ENCODE measurements at regions of chr2 and their contacts with region 1.

Region 1: GRCh38 chr2:134245340-134245984 is 8.4 kb upstream of the MGAT5 start:
- DNase-seq: peak; percentile 84
- ATAC-seq: peak; percentile 55
- H3K4me3 ChIP-seq: peak overlapping the region in 2 of 5 experiments; percentile 6 to 12
- H3K4me3 Mint-ChIP-seq: peak overlapping the region; percentile 76
- H3K27ac ChIP-seq: peak overlapping the region; percentile 50 to 83
- H3K27ac Mint-ChIP-seq: peak overlapping the region; percentile 85
- H3K4me1 ChIP-seq: peaks cover 87 to 92% of the 10 kb centered on the region in 2 donors
- H3K4me1 Mint-ChIP-seq: peaks cover 92% of the 10 kb centered on the region
- H3K27me3 ChIP-seq: no peaks in the 10 kb centered on the region
- H3K27me3 Mint-ChIP-seq: no peaks in the 10 kb centered on the region
- CTCF ChIP-seq: peak; percentile 80

Region 2: GRCh38 chr2:133690780-133691179 is 554.7 kb before region 1 on chr2:
- CTCF ChIA-PET with region 1: no interaction called
- POLR2A ChIA-PET with region 1: no interaction called
- intact Hi-C with region 1: no loop called
- DNase-seq: no peak
- ATAC-seq: no peak
- H3K4me3 ChIP-seq: no peak overlapping the region
- H3K4me3 Mint-ChIP-seq: no peak overlapping the region
- H3K27ac ChIP-seq: no peak overlapping the region
- H3K27ac Mint-ChIP-seq: no peak overlapping the region
- H3K4me1 ChIP-seq: no peaks in the 10 kb centered on the region
- H3K4me1 Mint-ChIP-seq: no peaks in the 10 kb centered on the region
- H3K27me3 ChIP-seq: no peaks in the 10 kb centered on the region
- H3K27me3 Mint-ChIP-seq: peaks cover 6% of the 10 kb centered on the region
- CTCF ChIP-seq: no peak

Region 3: GRCh38 chr2:134127496-134127895 is 118.0 kb before region 1 on chr2:
- CTCF ChIA-PET with region 1: interaction called, 58 read pairs
- POLR2A ChIA-PET with region 1: no interaction called
- intact Hi-C with region 1: no loop called
- DNase-seq: no peak
- ATAC-seq: peak; percentile 50
- H3K4me3 ChIP-seq: no peak overlapping the region
- H3K4me3 Mint-ChIP-seq: peak overlapping the region; percentile 73
- H3K27ac ChIP-seq: peak overlapping the region in 1 of 2 donors; percentile 65
- H3K27ac Mint-ChIP-seq: peak overlapping the region; percentile 71
- H3K4me1 ChIP-seq: peaks cover 70 to 74% of the 10 kb centered on the region in 2 donors
- H3K4me1 Mint-ChIP-seq: peaks cover 85% of the 10 kb centered on the region
- H3K27me3 ChIP-seq: no peaks in the 10 kb centered on the region
- H3K27me3 Mint-ChIP-seq: no peaks in the 10 kb centered on the region
- CTCF ChIP-seq: no peak

Region 4: DNA sequence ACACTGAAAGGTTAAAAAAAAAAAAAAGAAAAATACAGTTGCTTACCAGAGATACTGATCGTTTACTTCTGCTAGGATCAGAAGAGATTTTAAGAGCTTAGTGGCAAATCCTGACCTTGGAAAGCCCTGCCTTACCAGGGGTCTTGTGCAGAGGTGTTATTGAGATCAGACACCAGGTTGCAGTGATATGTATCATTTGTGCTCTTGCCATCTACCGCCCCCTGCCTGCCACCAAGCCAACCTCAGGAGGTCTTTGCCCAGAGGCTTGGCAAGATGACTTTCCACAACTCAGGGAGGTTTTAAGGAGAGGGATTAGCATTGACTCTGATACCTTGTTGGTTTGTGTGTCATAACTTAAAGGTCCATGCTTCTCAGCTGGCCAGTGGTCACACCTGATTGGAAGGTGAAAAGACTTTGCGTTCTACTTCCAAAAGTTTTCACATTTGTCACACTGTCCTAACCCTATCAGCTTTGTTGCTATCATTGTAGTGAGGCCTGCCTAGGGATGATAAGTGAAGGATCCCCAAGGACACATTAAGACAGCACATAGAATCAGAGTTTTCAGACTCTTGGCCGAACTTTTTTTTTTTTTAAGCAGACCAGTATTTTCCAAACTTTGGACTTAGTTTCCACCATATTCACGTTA is 37.8 kb before region 1 on chr2:
- CTCF ChIA-PET with region 1: interaction called, 60 read pairs
- POLR2A ChIA-PET with region 1: no interaction called
- intact Hi-C with region 1: loop called (anchors 5 kb)
- DNase-seq: peak; percentile 68
- ATAC-seq: peak; percentile 82
- H3K4me3 ChIP-seq: no peak overlapping the region
- H3K4me3 Mint-ChIP-seq: no peak overlapping the region
- H3K27ac ChIP-seq: peak overlapping the region in 1 of 2 donors; percentile 64
- H3K27ac Mint-ChIP-seq: peak overlapping the region; percentile 69
- H3K4me1 ChIP-seq: peaks cover 49 to 53% of the 10 kb centered on the region in 2 donors
- H3K4me1 Mint-ChIP-seq: peaks cover 12% of the 10 kb centered on the region
- H3K27me3 ChIP-seq: no peaks in the 10 kb centered on the region
- H3K27me3 Mint-ChIP-seq: no peaks in the 10 kb centered on the region
- CTCF ChIP-seq: peak; percentile 75

Region 5: DNA sequence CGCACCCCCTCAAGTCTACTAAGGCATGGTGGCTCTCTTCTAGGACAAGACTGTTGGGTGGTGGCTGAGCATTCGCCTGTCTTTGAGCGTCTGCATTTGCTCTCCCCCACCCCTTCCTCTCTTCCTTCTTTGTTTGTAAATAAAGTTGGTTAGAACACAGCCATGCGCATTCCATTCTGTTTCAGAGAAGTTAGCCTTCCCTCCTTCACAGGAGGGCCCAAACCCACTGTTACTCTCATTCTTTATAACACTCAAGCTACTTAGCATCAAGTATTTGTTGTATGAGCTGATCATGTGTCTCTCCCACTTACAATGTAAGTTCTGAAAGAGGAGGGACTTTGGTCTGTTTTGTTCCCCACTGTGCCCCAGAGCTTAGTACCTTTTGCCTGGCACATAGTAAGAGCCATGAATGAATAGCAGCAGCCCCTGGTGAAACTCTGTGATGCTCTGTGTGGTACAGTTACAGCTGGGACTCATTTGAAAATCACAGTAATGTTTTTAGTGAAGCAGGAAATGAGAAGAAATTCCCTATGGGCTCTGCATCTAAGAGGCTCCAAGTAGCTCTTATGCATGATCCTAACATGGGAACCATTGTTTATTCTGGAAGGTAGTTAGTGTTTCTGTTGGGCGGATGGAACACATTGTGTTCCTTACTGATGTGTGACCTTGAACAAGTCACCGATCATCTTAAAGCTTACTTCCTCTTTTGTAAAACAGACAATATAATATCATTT is 16.1 kb after region 1 on chr2:
- CTCF ChIA-PET with region 1: interaction called, 65 read pairs
- POLR2A ChIA-PET with region 1: interaction called, 14 read pairs
- intact Hi-C with region 1: loop called (anchors 2 kb)
- DNase-seq: peak; percentile 78
- ATAC-seq: peak; percentile 55
- H3K4me3 ChIP-seq: peak overlapping the region in 1 of 5 experiments; percentile 22
- H3K4me3 Mint-ChIP-seq: peak overlapping the region; percentile 80
- H3K27ac ChIP-seq: peak overlapping the region; percentile 94 to 96
- H3K27ac Mint-ChIP-seq: peak overlapping the region; percentile 99
- H3K4me1 ChIP-seq: peaks cover 92 to 94% of the 10 kb centered on the region in 2 donors
- H3K4me1 Mint-ChIP-seq: peaks cover 86% of the 10 kb centered on the region
- H3K27me3 ChIP-seq: no peaks in the 10 kb centered on the region
- H3K27me3 Mint-ChIP-seq: no peaks in the 10 kb centered on the region
- CTCF ChIP-seq: no peak

Region 6: GRCh38 chr2:134282629-134283400 is 37.4 kb after region 1 on chr2:
- CTCF ChIA-PET with region 1: interaction called, 14 read pairs
- POLR2A ChIA-PET with region 1: no interaction called
- intact Hi-C with region 1: no loop called
- DNase-seq: peak; percentile 56
- ATAC-seq: peak; percentile 64
- H3K4me3 ChIP-seq: peak overlapping the region in 1 of 5 experiments; percentile 40
- H3K4me3 Mint-ChIP-seq: peak overlapping the region; percentile 77
- H3K27ac ChIP-seq: peak overlapping the region; percentile 56 to 80
- H3K27ac Mint-ChIP-seq: peak overlapping the region; percentile 88
- H3K4me1 ChIP-seq: peaks cover 95 to 100% of the 10 kb centered on the region in 2 donors
- H3K4me1 Mint-ChIP-seq: peaks cover 78% of the 10 kb centered on the region
- H3K27me3 ChIP-seq: no peaks in the 10 kb centered on the region
- H3K27me3 Mint-ChIP-seq: no peaks in the 10 kb centered on the region
- CTCF ChIP-seq: no peak

Region 7: GRCh38 chr2:134341476-134341875 is 96.0 kb after region 1 on chr2:
- CTCF ChIA-PET with region 1: interaction called, 18 read pairs
- POLR2A ChIA-PET with region 1: no interaction called
- intact Hi-C with region 1: no loop called
- DNase-seq: no peak
- ATAC-seq: no peak
- H3K4me3 ChIP-seq: no peak overlapping the region
- H3K4me3 Mint-ChIP-seq: no peak overlapping the region
- H3K27ac ChIP-seq: peak overlapping the region in 1 of 2 donors; percentile 55
- H3K27ac Mint-ChIP-seq: no peak overlapping the region
- H3K4me1 ChIP-seq: peaks cover 4 to 11% of the 10 kb centered on the region in 2 donors
- H3K4me1 Mint-ChIP-seq: peaks cover 53% of the 10 kb centered on the region
- H3K27me3 ChIP-seq: no peaks in the 10 kb centered on the region
- H3K27me3 Mint-ChIP-seq: no peaks in the 10 kb centered on the region
- CTCF ChIP-seq: no peak